ENCODE measurements at regions of chr9 and their contacts with region 1.

Region 1: GRCh38 chr9:84170521-84171141 is 169.9 kb downstream of the SLC28A3 start:
- DNase-seq: peak in 1 of 9 experiments; percentile 17
- ATAC-seq: no peak
- H3K4me3 ChIP-seq: no peak overlapping the region
- H3K4me3 Mint-ChIP-seq: no peak overlapping the region
- H3K27ac ChIP-seq: no peak overlapping the region
- H3K27ac Mint-ChIP-seq: no peak overlapping the region
- H3K4me1 ChIP-seq: no peaks in the 10 kb centered on the region
- H3K4me1 Mint-ChIP-seq: no peaks in the 10 kb centered on the region
- H3K27me3 ChIP-seq: no peaks in the 10 kb centered on the region
- H3K27me3 Mint-ChIP-seq: no peaks in the 10 kb centered on the region
- CTCF ChIP-seq: no peak

Region 2: GRCh38 chr9:83937911-83938323 is 232.7 kb before region 1 on chr9:
- CTCF ChIA-PET with region 1: interaction called, 43 read pairs
- POLR2A ChIA-PET with region 1: no interaction called
- intact Hi-C with region 1: loop called (anchors 1 kb)
- DNase-seq: peak in 6 of 9 experiments; percentile 4 to 78 (median 40)
- ATAC-seq: peak; percentile 77
- H3K4me3 ChIP-seq: no peak overlapping the region
- H3K4me3 Mint-ChIP-seq: no peak overlapping the region
- H3K27ac ChIP-seq: no peak overlapping the region
- H3K27ac Mint-ChIP-seq: no peak overlapping the region
- H3K4me1 ChIP-seq: no peaks in the 10 kb centered on the region
- H3K4me1 Mint-ChIP-seq: peaks cover 2% of the 10 kb centered on the region
- H3K27me3 ChIP-seq: no peaks in the 10 kb centered on the region
- H3K27me3 Mint-ChIP-seq: no peaks in the 10 kb centered on the region
- CTCF ChIP-seq: peak; percentile 80

Region 3: GRCh38 chr9:84111726-84112125 is 58.9 kb before region 1 on chr9:
- CTCF ChIA-PET with region 1: no interaction called
- POLR2A ChIA-PET with region 1: no interaction called
- intact Hi-C with region 1: no loop called
- DNase-seq: no peak
- ATAC-seq: no peak
- H3K4me3 ChIP-seq: no peak overlapping the region
- H3K4me3 Mint-ChIP-seq: no peak overlapping the region
- H3K27ac ChIP-seq: no peak overlapping the region
- H3K27ac Mint-ChIP-seq: no peak overlapping the region
- H3K4me1 ChIP-seq: peaks cover 11% of the 10 kb centered on the region
- H3K4me1 Mint-ChIP-seq: peaks cover 14% of the 10 kb centered on the region
- H3K27me3 ChIP-seq: peaks cover 0 to 3% of the 10 kb centered on the region in 2 experiments
- H3K27me3 Mint-ChIP-seq: peaks cover 19% of the 10 kb centered on the region
- CTCF ChIP-seq: no peak

Region 4: GRCh38 chr9:84187090-84187489 is 16.5 kb after region 1 on chr9:
- CTCF ChIA-PET with region 1: interaction called, 14 read pairs
- POLR2A ChIA-PET with region 1: no interaction called
- intact Hi-C with region 1: no loop called
- DNase-seq: no peak
- ATAC-seq: no peak
- H3K4me3 ChIP-seq: no peak overlapping the region
- H3K4me3 Mint-ChIP-seq: no peak overlapping the region
- H3K27ac ChIP-seq: no peak overlapping the region
- H3K27ac Mint-ChIP-seq: no peak overlapping the region
- H3K4me1 ChIP-seq: no peaks in the 10 kb centered on the region
- H3K4me1 Mint-ChIP-seq: no peaks in the 10 kb centered on the region
- H3K27me3 ChIP-seq: no peaks in the 10 kb centered on the region
- H3K27me3 Mint-ChIP-seq: peaks cover 13% of the 10 kb centered on the region
- CTCF ChIP-seq: no peak

Measured in CD8-positive, alpha-beta T cell (primary cell).